Psoas muscle (tissue), 8 donors: ENCODE measurements at regions of chr1 and their contacts with region 1.

Region 1: GRCh38 chr1:225999227-225999911 is at the start of gene SDE2:
- DNase-seq: peak; percentile 100
- ATAC-seq: peak; percentile 97 to 99 (median 98)
- H3K4me3 ChIP-seq: peak within 1 kb of the TSS; percentile 81
- H3K27ac ChIP-seq: peak within 1 kb of the TSS; percentile 90
- H3K4me1 ChIP-seq: peaks cover 33% of the 10 kb centered on the region
- H3K27me3 ChIP-seq: no peaks in the 10 kb centered on the region
- CTCF ChIP-seq: no peak
- total RNA-seq, gene SDE2: 17.4 to 27.7 (median 22.1) TPM

Region 2: GRCh38 chr1:225652729-225653462 is 346.5 kb before region 1 on chr1 and contains the start of gene ENAH:
- intact Hi-C with region 1: no loop called
- DNase-seq: peak; percentile 87 to 90
- ATAC-seq: peak; percentile 71 to 77 (median 74)
- H3K4me3 ChIP-seq: peak within 1 kb of the TSS; percentile 85
- H3K27ac ChIP-seq: peak within 1 kb of the TSS; percentile 99
- H3K4me1 ChIP-seq: peaks cover 53% of the 10 kb centered on the region
- H3K27me3 ChIP-seq: no peaks in the 10 kb centered on the region
- CTCF ChIP-seq: no peak
- total RNA-seq, gene ENAH: 119 to 262 (median 177) TPM

Region 3: GRCh38 chr1:226062558-226063223 is 63.3 kb after region 1 on chr1 and contains the start of gene H3-3A:
- intact Hi-C with region 1: loop called (anchors 2 to 5 kb)
- DNase-seq: peak; percentile 99 to 100
- ATAC-seq: peak; percentile 90 to 95 (median 92)
- H3K4me3 ChIP-seq: peak within 1 kb of the TSS; percentile 95
- H3K27ac ChIP-seq: peak within 1 kb of the TSS; percentile 99
- H3K4me1 ChIP-seq: peaks cover 34% of the 10 kb centered on the region
- H3K27me3 ChIP-seq: no peaks in the 10 kb centered on the region
- CTCF ChIP-seq: peak; percentile 14
- total RNA-seq, gene H3-3A: 187 to 284 (median 210) TPM

Region 4: DNA sequence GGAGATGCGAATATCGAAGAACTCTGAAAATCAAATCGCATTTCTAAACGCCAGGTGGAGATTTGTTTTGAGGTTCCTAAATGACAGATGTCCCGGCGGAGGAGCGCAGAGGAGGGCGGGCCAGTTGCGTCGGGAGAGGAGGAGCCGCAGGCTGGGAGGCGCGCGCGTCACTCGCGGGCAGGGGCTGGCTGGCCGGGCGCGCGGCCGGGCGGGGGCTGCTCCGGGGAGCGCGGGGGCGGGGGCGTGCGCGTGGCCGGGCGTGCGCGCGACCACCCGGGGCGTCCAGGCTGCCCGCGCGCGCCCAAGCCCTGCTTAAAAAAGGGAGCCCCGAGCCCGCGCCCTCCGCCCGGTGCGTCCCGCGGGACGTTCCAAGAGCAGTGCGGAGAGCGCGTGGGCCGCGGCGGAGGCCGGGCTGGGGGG is 110.5 kb after region 1 on chr1:
- intact Hi-C with region 1: loop called in 1 of 2 experiments (anchors 10 kb)
- DNase-seq: peak; percentile 90 to 94
- ATAC-seq: peak; percentile 90 to 93 (median 92)
- H3K4me3 ChIP-seq: peak overlapping the region; percentile 83
- H3K27ac ChIP-seq: peak overlapping the region; percentile 89
- H3K4me1 ChIP-seq: peaks cover 28% of the 10 kb centered on the region
- H3K27me3 ChIP-seq: no peaks in the 10 kb centered on the region
- CTCF ChIP-seq: peak; percentile 11

Region 5: DNA sequence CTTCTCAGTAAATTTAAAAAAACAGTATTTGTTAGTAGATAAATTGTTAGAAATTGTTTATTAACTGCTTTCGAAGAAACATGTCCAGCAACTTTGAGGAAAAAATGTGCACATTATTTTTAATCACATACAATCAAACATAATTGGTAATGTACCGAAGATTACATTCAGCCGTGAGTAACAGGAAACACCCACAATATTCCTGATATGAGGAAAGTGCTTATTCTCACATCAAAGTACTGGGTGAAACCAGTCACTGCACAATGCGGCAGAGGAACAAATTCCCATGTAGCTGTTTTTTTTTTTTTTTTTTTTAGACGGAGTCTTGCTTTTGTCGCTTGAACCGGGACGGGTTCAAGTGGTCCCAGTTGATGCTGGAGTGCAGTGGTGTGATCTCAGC is 177.5 kb after region 1 on chr1:
- intact Hi-C with region 1: no loop called
- DNase-seq: no peak
- ATAC-seq: no peak
- H3K4me3 ChIP-seq: no peak overlapping the region
- H3K27ac ChIP-seq: no peak overlapping the region
- H3K4me1 ChIP-seq: peaks cover 19% of the 10 kb centered on the region
- H3K27me3 ChIP-seq: no peaks in the 10 kb centered on the region
- CTCF ChIP-seq: no peak

Region 6: DNA sequence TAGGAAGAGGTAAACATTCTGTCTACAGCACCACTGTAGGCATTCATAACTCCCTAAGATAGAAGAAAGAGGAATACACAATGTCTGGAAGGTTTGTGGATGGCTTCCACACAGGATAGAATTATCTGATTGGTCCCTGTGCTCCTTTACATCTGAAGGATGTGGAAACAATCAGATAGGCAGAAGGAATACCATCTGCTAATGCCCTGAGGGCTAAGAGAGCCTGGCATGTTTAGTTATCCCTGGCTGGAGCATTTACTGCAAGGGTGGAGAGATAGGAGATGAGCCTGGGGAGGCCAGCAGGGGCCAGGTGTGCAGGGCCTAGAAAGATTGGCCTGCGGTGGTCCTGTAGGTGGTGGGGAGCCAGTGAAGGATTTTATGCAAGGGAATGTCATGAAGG is 195.8 kb after region 1 on chr1:
- intact Hi-C with region 1: no loop called
- DNase-seq: no peak
- ATAC-seq: no peak
- H3K4me3 ChIP-seq: no peak overlapping the region
- H3K27ac ChIP-seq: no peak overlapping the region
- H3K4me1 ChIP-seq: no peaks in the 10 kb centered on the region
- H3K27me3 ChIP-seq: no peaks in the 10 kb centered on the region
- CTCF ChIP-seq: no peak